PC-9 (cell line): ENCODE measurements at regions of chr9 and their contacts with region 1.

Region 1: DNA sequence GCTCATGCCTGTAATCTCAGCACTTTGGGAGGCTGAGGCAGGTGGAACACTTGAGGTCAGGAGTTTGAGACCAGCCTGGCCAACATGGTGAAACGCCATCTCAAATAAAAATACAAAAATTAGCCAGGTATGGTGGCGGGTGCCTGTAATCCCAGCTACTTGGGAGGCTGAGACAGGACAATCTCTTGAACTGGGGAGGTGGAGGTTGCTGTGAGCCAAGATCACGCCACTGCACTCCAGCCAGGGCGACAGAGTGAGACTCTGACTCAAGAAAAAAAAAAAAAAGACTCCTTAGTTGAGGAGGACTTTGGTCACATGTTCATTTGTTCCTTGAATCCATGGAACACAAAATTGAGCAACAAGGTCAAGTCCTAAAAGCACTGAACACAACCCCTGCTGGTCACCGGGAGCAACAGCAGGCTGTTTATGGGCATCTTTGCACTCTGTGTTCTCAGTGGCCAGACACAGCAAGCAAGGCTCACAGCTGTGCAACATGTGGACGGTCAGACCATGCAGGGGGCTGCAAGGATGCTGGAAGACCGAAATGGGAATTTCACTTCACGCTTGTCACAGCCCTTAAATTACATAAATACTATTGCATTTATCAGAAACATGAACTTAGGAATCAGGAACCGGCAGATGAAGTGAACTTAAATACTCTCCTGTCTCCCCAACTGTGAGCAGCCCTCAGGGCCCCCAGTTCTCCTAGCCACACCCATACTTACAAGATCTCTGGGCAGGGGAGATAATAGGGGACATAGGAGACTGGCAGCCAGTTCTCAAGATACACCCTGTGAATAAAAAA is 2.8 kb downstream of the GBGT1 start:
- DNase-seq: peak; percentile 50 to 71
- H3K4me3 ChIP-seq: no peak overlapping the region
- H3K27ac ChIP-seq: no peak overlapping the region
- H3K4me1 ChIP-seq: no peaks in the 10 kb centered on the region
- H3K27me3 ChIP-seq: peaks cover 17% of the 10 kb centered on the region
- CTCF ChIP-seq: peak; percentile 78

Region 2: DNA sequence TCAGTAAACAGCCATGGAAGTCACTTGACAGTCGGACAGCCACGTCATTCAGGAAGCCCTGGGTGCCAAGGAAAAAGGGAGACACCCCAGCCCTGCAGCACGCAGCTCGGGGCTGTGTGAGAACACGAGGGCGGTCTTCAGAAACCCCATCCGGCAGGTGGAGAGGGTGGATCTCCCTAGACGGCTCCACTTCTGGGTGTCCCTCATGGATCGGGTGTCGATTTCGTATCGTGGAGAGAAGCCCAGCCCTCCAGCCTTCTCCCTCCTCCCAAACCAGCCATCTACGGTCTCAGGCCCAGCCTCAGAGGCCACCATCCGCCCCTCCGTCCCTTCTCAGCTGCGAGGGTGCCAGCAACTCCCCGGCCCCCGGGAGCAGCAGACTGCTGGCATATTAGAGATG is 644.0 kb before region 1 on chr9:
- CTCF ChIA-PET with region 1: no interaction called
- POLR2A ChIA-PET with region 1: no interaction called
- intact Hi-C with region 1: no loop called
- DNase-seq: no peak
- H3K4me3 ChIP-seq: no peak overlapping the region
- H3K27ac ChIP-seq: no peak overlapping the region
- H3K4me1 ChIP-seq: no peaks in the 10 kb centered on the region
- H3K27me3 ChIP-seq: peaks cover 86% of the 10 kb centered on the region
- CTCF ChIP-seq: no peak

Region 3: DNA sequence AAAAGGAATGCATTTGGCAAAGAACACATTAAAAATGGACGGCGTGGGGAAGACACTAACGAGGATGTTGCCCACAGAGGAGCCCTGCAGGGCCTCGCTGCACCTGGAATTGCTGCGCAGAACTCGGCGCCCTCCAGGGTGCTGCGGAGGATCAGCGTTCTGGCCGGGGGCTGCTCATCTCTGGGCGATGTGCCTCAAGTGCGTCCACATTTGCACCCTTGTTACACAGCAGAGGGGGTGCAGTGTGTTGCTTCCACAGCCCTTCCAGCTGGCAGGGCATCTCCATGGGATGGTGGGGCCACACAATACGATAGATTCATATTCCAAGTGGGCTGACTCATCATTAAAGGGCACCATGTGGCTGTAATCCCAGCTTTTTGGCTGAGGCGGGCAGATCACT is 346.0 kb before region 1 on chr9:
- CTCF ChIA-PET with region 1: no interaction called
- POLR2A ChIA-PET with region 1: no interaction called
- intact Hi-C with region 1: no loop called
- DNase-seq: no peak
- H3K4me3 ChIP-seq: no peak overlapping the region
- H3K27ac ChIP-seq: no peak overlapping the region
- H3K4me1 ChIP-seq: no peaks in the 10 kb centered on the region
- H3K27me3 ChIP-seq: peaks cover 13% of the 10 kb centered on the region; the same call in 1 of the 2 replicates
- CTCF ChIP-seq: no peak

Region 4: DNA sequence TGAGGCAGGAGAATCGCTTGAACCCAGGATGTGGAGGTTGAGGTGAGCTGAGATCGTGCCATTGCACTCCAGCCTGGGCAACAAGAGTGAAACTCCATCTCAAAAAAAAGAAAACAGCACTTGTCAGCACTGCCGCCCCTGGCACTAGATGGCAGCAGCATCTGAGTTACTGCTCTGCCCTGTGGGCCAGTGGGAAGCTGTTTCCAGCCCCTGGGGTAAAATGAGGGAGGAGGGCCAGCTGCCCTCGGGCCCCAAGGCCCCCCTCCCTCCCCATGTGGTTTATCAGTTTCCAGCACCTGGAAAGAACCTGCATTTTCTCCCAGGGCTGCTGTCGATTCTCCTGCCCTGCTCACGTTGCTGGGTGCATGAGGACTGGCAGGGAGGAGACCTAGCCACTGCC is 112.4 kb before region 1 on chr9:
- CTCF ChIA-PET with region 1: no interaction called
- POLR2A ChIA-PET with region 1: interaction called, 12 read pairs
- intact Hi-C with region 1: no loop called
- DNase-seq: peak in 1 of 2 experiments; percentile 34
- H3K4me3 ChIP-seq: no peak overlapping the region
- H3K27ac ChIP-seq: no peak overlapping the region
- H3K4me1 ChIP-seq: no peaks in the 10 kb centered on the region
- H3K27me3 ChIP-seq: no peaks in the 10 kb centered on the region
- CTCF ChIP-seq: peak; percentile 59

Region 5: GRCh38 chr9:133108794-133109641 is 51.9 kb before region 1 on chr9:
- CTCF ChIA-PET with region 1: no interaction called
- POLR2A ChIA-PET with region 1: interaction called, 24 read pairs
- intact Hi-C with region 1: no loop called
- DNase-seq: no peak
- H3K4me3 ChIP-seq: no peak overlapping the region
- H3K27ac ChIP-seq: no peak overlapping the region
- H3K4me1 ChIP-seq: peaks cover 2% of the 10 kb centered on the region
- H3K27me3 ChIP-seq: no peaks in the 10 kb centered on the region
- CTCF ChIP-seq: no peak